BJ (cell line): ENCODE measurements at regions of chr13 and their contacts with region 1.

Region 1: GRCh38 chr13:94620286-94620896 is 18.7 kb downstream of the GPR180 start:
- DNase-seq: no peak
- H3K4me3 ChIP-seq: no peak overlapping the region
- H3K27me3 ChIP-seq: no peaks in the 10 kb centered on the region
- CTCF ChIP-seq: peak; percentile 69

Region 2: DNA sequence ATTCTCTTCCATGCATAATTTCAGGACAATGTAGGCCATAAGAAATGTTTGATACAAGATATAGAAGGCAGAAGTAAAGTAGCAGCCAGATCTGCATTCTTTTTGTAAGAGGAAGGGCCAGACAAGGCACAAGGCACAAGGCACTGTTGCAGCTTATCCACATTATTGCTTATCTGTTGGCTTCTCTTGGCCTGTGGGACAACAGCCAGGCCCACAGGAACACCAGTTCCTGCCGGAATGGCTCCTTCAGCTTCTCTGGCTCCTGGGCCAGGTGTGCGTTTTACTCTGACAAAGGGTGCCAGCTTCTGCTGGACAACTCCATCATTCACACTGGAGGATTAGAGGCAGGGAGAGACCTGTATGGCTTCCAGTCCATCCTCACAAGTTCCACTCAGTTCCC is 10.5 kb after region 1 on chr13:
- CTCF ChIA-PET with region 1: interaction called, 13 read pairs
- POLR2A ChIA-PET with region 1: no interaction called
- DNase-seq: no peak
- H3K4me3 ChIP-seq: no peak overlapping the region
- H3K27me3 ChIP-seq: no peaks in the 10 kb centered on the region
- CTCF ChIP-seq: no peak

Region 3: GRCh38 chr13:94731028-94731427 is 110.6 kb after region 1 on chr13:
- CTCF ChIA-PET with region 1: no interaction called
- POLR2A ChIA-PET with region 1: no interaction called
- DNase-seq: no peak
- H3K4me3 ChIP-seq: no peak overlapping the region
- H3K27me3 ChIP-seq: no peaks in the 10 kb centered on the region
- CTCF ChIP-seq: no peak

Region 4: GRCh38 chr13:94753327-94753726 is 132.9 kb after region 1 on chr13:
- CTCF ChIA-PET with region 1: no interaction called
- POLR2A ChIA-PET with region 1: no interaction called
- DNase-seq: no peak
- H3K4me3 ChIP-seq: no peak overlapping the region
- H3K27me3 ChIP-seq: no peaks in the 10 kb centered on the region
- CTCF ChIP-seq: no peak